ENCODE measurements at regions of chr20 and their contacts with region 1.

Region 1: GRCh38 chr20:47508278-47508677 is 6.6 kb downstream of the NCOA3 start:
- DNase-seq: no peak
- ATAC-seq: no peak
- H3K4me3 ChIP-seq: no peak overlapping the region
- H3K27ac ChIP-seq: peak overlapping the region in 1 of 12 donors; percentile 17
- H3K4me1 ChIP-seq: peaks cover 0 to 58% (median 28%) of the 10 kb centered on the region in 12 donors
- H3K27me3 ChIP-seq: no peaks in the 10 kb centered on the region
- CTCF ChIP-seq: no peak
- POLR2A ChIP-seq: no peak

Region 2: GRCh38 chr20:47546184-47547033 is 38.1 kb after region 1 on chr20:
- intact Hi-C with region 1: loop called in 2 of 10 experiments (anchors 5 kb)
- DNase-seq: peak in 1 of 5 donors; percentile 16
- ATAC-seq: no peak
- H3K4me3 ChIP-seq: no peak overlapping the region
- H3K27ac ChIP-seq: no peak overlapping the region
- H3K4me1 ChIP-seq: peaks cover 6 to 67% (median 45%) of the 10 kb centered on the region in 12 donors
- H3K27me3 ChIP-seq: no peaks in the 10 kb centered on the region
- CTCF ChIP-seq: no peak
- POLR2A ChIP-seq: no peak

Region 3: GRCh38 chr20:47921326-47921774 is 413.1 kb after region 1 on chr20:
- intact Hi-C with region 1: no loop called
- DNase-seq: no peak
- ATAC-seq: no peak
- H3K4me3 ChIP-seq: no peak overlapping the region
- H3K27ac ChIP-seq: no peak overlapping the region
- H3K4me1 ChIP-seq: no peaks in the 10 kb centered on the region
- H3K27me3 ChIP-seq: peaks cover 0 to 33% (median 3%) of the 10 kb centered on the region in 9 donors
- CTCF ChIP-seq: no peak
- POLR2A ChIP-seq: no peak

Measured in heart left ventricle (tissue), 16 donors.